Mammary epithelial cell (primary cell): ENCODE measurements at regions of chr17 and their contacts with region 1.

Region 1: GRCh38 chr17:49851387-49852291 is 3.8 kb upstream of the TAC4 start:
- DNase-seq: no peak
- H3K4me3 ChIP-seq: peak overlapping the region; percentile 29 to 44 (median 41)
- H3K27ac ChIP-seq: no peak overlapping the region
- H3K4me1 ChIP-seq: peaks cover 9% of the 10 kb centered on the region
- H3K27me3 ChIP-seq: peaks cover 6% of the 10 kb centered on the region
- CTCF ChIP-seq: peak; percentile 23 to 36

Region 2: DNA sequence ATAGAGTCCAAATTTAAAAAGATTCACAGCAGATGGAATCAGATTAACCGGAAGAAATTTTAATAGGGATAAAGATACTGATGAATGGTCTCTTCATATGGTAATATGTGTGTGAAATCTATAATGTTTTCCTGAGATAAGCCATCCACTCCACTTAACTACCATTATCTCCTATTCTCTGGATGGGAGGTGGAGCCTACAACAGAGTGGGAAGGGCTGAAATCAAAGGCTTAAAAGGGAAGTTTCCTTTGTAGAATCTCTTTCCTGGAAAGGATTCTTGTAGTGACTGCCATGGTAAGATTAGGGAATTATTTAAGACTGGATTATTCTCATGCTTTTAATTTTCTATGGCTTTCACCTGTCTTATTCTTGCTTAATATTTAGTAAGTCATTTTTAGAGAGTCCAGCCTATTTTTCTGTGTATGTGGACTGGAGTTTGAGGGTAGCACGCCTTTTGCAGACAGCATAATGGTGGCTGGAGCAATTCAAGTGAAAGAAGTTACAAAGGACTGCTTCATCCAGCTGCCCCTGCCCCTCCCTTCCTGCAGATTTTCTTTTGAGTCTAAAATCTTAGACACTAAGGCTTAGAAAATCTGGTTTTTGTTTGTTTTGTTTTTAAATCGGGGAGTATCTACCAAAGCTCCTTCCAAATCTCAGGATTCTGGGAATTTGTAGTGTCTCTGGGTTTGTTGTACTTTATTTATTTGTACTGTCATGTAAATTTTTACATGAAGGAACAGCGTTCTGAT is 36.7 kb before region 1 on chr17:
- CTCF ChIA-PET with region 1: no interaction called
- dilution Hi-C with region 1: loop called (anchors 5 kb)
- in situ Hi-C with region 1: no loop called
- intact Hi-C with region 1: no loop called
- DNase-seq: no peak
- H3K4me3 ChIP-seq: no peak overlapping the region
- H3K27ac ChIP-seq: peak overlapping the region; percentile 6
- H3K4me1 ChIP-seq: peaks cover 14% of the 10 kb centered on the region
- H3K27me3 ChIP-seq: no peaks in the 10 kb centered on the region
- CTCF ChIP-seq: no peak

Region 3: GRCh38 chr17:49887086-49888028 is 35.7 kb after region 1 on chr17:
- CTCF ChIA-PET with region 1: no interaction called
- dilution Hi-C with region 1: loop called (anchors 5 kb)
- in situ Hi-C with region 1: no loop called
- intact Hi-C with region 1: no loop called
- DNase-seq: peak; percentile 46
- H3K4me3 ChIP-seq: no peak overlapping the region
- H3K27ac ChIP-seq: no peak overlapping the region
- H3K4me1 ChIP-seq: peaks cover 11% of the 10 kb centered on the region
- H3K27me3 ChIP-seq: no peaks in the 10 kb centered on the region
- CTCF ChIP-seq: no peak

Region 4: GRCh38 chr17:49910094-49910857 is 58.6 kb after region 1 on chr17:
- CTCF ChIA-PET with region 1: no interaction called
- dilution Hi-C with region 1: no loop called
- in situ Hi-C with region 1: no loop called
- intact Hi-C with region 1: no loop called
- DNase-seq: peak; percentile 80
- H3K4me3 ChIP-seq: no peak overlapping the region
- H3K27ac ChIP-seq: no peak overlapping the region
- H3K4me1 ChIP-seq: peaks cover 7% of the 10 kb centered on the region
- H3K27me3 ChIP-seq: peaks cover 9% of the 10 kb centered on the region
- CTCF ChIP-seq: no peak

Region 5: DNA sequence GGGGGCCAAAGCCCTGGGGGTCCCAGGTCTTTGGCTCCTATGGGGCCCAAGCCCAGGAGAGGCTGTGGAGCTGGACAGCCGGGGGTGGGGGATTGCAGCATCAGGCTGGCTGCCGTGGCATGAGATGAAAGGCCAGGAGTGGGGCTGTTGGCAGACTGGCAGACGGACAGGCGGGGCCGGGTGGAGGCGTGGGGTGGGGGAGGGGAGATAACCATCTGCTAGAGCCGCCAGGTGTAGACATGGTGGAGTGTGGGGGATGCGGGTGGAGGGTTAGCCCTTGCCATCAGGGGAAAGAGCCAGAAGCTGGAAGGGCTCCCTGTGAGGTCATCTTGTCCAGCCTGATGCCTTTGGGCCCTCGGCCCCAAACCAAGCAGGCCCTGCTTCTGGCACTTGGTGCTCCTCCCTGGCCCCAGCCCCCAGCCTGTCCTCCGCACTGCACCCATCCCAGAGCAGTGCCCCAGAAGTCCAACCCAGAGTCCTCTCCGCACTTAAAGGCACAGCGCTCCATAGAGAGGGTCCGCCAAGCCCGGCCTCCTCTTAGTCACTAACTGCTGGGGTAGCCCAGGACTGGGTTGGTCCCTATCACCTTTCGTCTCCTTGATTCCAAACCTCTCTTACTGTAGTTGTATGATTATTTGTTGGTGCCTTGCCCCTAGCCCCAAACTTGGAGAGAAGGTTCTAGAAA is 84.0 kb after region 1 on chr17:
- CTCF ChIA-PET with region 1: no interaction called
- dilution Hi-C with region 1: loop called (anchors 5 kb)
- in situ Hi-C with region 1: no loop called
- intact Hi-C with region 1: no loop called
- DNase-seq: no peak
- H3K4me3 ChIP-seq: no peak overlapping the region
- H3K27ac ChIP-seq: no peak overlapping the region
- H3K4me1 ChIP-seq: no peaks in the 10 kb centered on the region
- H3K27me3 ChIP-seq: peaks cover 4% of the 10 kb centered on the region
- CTCF ChIP-seq: no peak